Activated T-helper 1 cell treated with anti-CD3 and anti-CD28 coated beads, Interleukin-12 subunit alpha, Interleukin-12 subunit beta, Interleukin-2, Interleukin-4 antibody, amounts not matched to agents 30 ng/mL and 10 ng/mL and 1 ng/mL, durations not matched to agents 14 hours and 24 hours and 36 hours (primary cell): ENCODE measurements at regions of chr1 and their contacts with region 1.

Region 1: GRCh38 chr1:53278201-53278725 is 39.9 kb upstream of the MAGOH start:
- DNase-seq: peak; percentile 59
- H3K4me3 Mint-ChIP-seq: no peak overlapping the region
- H3K27ac Mint-ChIP-seq: no peak overlapping the region
- H3K4me1 Mint-ChIP-seq: no peaks in the 10 kb centered on the region
- H3K27me3 Mint-ChIP-seq: no peaks in the 10 kb centered on the region

Region 2: GRCh38 chr1:53473463-53473862 is 195.2 kb after region 1 on chr1:
- intact Hi-C with region 1: loop called (anchors 1 kb)
- DNase-seq: no peak
- H3K4me3 Mint-ChIP-seq: no peak overlapping the region
- H3K27ac Mint-ChIP-seq: no peak overlapping the region
- H3K4me1 Mint-ChIP-seq: no peaks in the 10 kb centered on the region
- H3K27me3 Mint-ChIP-seq: peaks cover 3% of the 10 kb centered on the region

Region 3: GRCh38 chr1:53550201-53550741 is 272.0 kb after region 1 on chr1:
- intact Hi-C with region 1: no loop called
- DNase-seq: no peak
- H3K4me3 Mint-ChIP-seq: no peak overlapping the region
- H3K27ac Mint-ChIP-seq: no peak overlapping the region
- H3K4me1 Mint-ChIP-seq: no peaks in the 10 kb centered on the region
- H3K27me3 Mint-ChIP-seq: peaks cover 2% of the 10 kb centered on the region